A549 (cell line): ENCODE measurements at regions of chr17 and their contacts with region 1.

Region 1: DNA sequence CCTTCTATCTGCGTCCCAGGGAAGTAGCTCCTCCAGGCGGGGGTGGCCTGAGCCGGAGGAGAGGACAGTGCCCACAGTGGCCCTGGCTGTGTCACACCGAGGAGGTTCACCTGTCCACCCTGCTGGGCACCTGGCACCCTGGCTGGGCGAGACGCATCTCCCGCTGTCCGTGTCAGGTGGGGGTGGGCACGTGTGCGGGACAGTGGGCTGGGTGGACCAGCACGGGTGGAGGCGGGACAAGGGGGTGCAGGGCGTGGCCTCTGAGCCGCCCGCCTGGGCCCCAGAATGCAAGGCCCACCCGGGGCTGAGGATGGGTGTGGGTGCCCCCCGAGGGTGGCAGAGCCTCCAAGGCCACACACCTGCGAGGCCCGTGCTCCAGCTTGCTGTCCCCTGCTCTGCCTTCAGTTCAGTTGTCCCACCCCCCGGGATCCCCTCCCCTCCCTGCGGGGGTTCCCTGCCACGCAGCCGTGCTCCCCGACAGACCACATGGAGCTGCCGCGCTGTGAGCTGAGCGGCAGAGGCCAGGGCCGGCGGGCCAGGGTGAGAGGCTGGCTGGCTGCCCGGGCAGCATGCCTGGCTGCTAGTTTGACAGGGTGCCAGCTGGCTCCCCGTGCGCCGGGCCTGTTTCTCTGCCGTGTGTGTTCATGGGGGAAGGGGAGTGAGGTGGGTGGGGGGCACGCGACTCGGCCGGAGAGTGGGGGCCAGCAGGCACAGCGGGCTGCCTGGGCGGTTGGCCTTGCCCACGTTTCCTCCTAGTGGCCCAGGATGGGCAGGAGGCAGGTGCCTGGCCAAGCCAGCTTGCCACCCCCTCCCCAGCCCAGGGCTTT is 33.9 kb downstream of the BAHCC1 start:
- DNase-seq: peak; percentile 64 to 80
- ATAC-seq: peak; percentile 49 to 77
- H3K4me3 ChIP-seq: no peak overlapping the region
- H3K27ac ChIP-seq: peak overlapping the region; percentile 69 to 84
- H3K4me1 ChIP-seq: peaks cover 51% of the 10 kb centered on the region
- CTCF ChIP-seq: no peak
- EP300 ChIP-seq: peak in 1 of 2 experiments; percentile 22; a peak in 1 of 5 replicates
- POLR2A ChIP-seq: no peak
- RAD21 ChIP-seq: peak in 1 of 2 experiments; percentile 34; a peak in 1 of 5 replicates

Region 2: GRCh38 chr17:81253358-81254131 is 175.6 kb before region 1 on chr17:
- CTCF ChIA-PET with region 1: interaction called, 12 read pairs
- POLR2A ChIA-PET with region 1: interaction called, 4 read pairs
- DNase-seq: peak; percentile 43 to 62
- ATAC-seq: peak; percentile 12 to 47; a peak in 3 of 6 replicates
- H3K4me3 ChIP-seq: no peak overlapping the region
- H3K27ac ChIP-seq: no peak overlapping the region
- H3K4me1 ChIP-seq: peaks cover 18% of the 10 kb centered on the region
- CTCF ChIP-seq: peak; percentile 92
- EP300 ChIP-seq: no peak
- POLR2A ChIP-seq: no peak
- RAD21 ChIP-seq: peak; percentile 95 to 98

Region 3: DNA sequence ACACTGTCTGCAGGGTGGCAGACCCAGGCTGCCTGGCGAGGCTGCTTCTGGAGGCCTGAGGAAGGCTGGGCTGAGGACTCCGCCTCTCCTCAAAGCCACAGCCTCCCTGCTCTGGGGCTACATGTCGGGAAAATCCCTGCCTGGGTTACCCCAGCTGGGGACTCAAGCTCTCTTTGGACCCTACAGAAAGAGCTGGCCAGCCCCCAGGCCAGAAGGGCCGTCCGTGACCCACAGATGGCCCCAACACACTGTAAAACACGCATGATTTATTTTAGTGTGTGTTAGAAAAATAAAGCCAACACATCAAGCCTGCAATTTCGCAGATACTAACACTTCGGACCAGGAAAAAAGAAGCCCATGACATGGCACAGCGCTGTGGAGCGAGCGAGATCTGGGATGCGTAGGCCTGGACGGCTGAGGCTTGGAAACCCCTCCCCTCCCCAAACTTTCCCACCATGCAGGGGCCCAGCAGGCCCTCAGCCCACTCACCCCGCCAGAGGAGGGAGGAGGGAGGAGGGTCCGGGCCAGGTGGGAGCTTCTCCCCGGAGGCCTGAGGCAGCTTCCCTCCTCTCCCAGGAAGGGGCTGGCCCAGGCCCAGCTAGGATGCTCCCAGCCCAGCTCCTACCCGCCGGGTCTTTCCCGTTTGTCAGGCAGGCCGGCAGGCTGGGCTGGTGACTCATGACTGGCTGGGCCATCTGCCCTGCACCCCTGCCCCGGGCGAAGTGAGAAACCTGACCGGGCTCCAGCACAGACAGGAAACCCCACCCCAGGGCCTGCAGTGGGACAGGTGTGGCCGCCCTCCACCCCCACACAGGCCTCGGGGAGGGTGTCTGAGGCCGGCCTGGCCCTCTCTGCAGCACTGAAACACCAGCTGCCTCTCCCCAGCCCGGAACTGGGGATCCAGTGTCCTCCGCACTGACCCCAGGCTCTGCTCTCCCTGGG is 99.9 kb before region 1 on chr17:
- CTCF ChIA-PET with region 1: interaction called, 10 read pairs
- POLR2A ChIA-PET with region 1: interaction called, 3 read pairs
- DNase-seq: peak; percentile 93 to 99
- ATAC-seq: peak; percentile 80 to 90
- H3K4me3 ChIP-seq: peak overlapping the region; percentile 30
- H3K27ac ChIP-seq: peak overlapping the region; percentile 93 to 94
- H3K4me1 ChIP-seq: peaks cover 39% of the 10 kb centered on the region
- CTCF ChIP-seq: no peak
- EP300 ChIP-seq: peak; percentile 19 to 41; a peak in 1 of 5 replicates
- POLR2A ChIP-seq: peak; percentile 25
- RAD21 ChIP-seq: peak; percentile 24 to 40; a peak in 2 of 5 replicates

Region 4: DNA sequence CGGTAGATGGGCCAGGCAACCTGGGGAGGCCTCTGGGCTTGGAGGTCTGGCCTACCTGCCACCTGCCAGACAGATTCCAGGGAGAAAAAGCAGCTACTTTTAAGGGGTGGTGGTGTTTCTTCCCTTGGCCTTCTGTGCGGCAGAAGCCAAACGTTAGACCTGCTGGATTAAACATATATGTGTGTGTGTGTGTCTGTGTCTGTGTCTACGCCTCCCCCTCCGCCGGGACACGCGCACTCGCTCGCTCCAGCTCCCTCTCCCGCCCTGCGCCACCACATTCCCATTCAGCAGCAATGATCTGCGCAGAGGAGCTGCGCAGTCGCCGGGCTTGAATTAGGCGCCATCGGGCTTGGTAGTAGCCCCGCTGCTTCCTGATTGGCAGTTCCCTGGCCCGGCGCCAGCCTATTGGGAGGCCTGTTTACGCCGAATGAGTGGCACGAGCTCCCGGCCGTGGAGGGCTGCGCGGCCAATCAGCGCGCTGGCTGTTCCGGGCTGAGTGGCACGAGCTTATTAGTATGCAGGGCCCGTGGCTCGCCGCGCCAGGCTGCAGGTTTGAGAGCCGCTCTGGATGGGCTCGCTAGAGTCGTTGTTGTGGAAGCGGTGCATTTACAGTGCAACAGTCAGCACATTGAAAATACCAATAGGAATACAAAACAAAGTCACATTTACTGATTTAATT is 34.1 kb before region 1 on chr17 and contains the start of gene BAHCC1:
- CTCF ChIA-PET with region 1: interaction called, 24 read pairs
- POLR2A ChIA-PET with region 1: interaction called, 107 read pairs
- DNase-seq: peak; percentile 99 to 100
- ATAC-seq: peak; percentile 65 to 85
- H3K4me3 ChIP-seq: peak within 1 kb of the TSS; percentile 76
- H3K27ac ChIP-seq: peak within 1 kb of the TSS; percentile 94 to 98
- H3K4me1 ChIP-seq: peaks cover 40% of the 10 kb centered on the region
- CTCF ChIP-seq: no peak
- EP300 ChIP-seq: no peak
- POLR2A ChIP-seq: peak; percentile 79
- RAD21 ChIP-seq: no peak
- polyA plus RNA-seq, gene BAHCC1: 2.1 and 2.6 TPM in 2 replicates

Region 5: DNA sequence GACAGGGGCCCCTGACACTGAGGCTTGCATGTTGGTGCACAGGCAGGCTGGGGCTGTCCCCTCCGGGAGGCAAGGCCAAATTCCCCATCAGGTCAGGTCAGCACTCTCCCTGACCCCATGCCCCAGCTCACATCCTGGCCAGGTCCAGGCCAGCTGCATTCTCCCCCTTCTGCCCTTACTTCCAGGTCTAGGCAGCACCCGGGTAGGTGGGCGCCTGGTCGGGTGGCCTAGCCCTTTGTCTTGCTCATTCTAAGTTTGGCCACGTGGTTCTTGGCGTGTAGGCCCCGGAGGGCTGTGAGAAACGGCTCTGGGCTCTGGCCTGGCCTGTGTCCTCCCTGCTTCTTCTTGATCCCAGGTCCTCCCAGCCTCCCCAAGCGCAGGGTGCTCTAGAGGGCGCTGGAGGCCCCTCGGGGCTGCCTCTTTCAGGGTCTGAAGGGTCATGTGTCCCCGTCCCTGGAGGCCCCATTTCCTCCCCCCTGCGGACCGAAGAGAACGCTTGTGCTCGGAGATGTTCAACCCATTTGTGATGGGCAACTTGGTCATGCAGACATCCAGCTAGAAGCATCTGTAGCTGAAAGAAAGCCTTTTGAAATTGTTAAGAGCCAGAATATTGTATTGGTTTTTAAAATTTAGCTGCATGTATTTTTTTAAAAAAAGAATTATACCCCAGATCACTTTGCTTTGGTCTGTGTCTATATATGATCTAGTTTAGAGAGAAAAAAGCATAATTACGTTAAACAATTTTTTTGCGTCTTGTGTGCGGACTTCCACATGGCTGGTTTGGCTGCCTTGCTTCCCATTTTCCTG is 27.2 kb before region 1 on chr17:
- CTCF ChIA-PET with region 1: interaction called, 24 read pairs
- POLR2A ChIA-PET with region 1: interaction called, 107 read pairs
- DNase-seq: peak; percentile 69 to 81
- ATAC-seq: peak in 1 of 2 experiments; percentile 54; a peak in 3 of 6 replicates
- H3K4me3 ChIP-seq: no peak overlapping the region
- H3K27ac ChIP-seq: peak overlapping the region; percentile 16 to 98; a peak in 3 of 6 replicates
- H3K4me1 ChIP-seq: peaks cover 49% of the 10 kb centered on the region
- CTCF ChIP-seq: peak; percentile 55
- EP300 ChIP-seq: no peak
- POLR2A ChIP-seq: no peak
- RAD21 ChIP-seq: peak; percentile 64 to 67

Region 6: DNA sequence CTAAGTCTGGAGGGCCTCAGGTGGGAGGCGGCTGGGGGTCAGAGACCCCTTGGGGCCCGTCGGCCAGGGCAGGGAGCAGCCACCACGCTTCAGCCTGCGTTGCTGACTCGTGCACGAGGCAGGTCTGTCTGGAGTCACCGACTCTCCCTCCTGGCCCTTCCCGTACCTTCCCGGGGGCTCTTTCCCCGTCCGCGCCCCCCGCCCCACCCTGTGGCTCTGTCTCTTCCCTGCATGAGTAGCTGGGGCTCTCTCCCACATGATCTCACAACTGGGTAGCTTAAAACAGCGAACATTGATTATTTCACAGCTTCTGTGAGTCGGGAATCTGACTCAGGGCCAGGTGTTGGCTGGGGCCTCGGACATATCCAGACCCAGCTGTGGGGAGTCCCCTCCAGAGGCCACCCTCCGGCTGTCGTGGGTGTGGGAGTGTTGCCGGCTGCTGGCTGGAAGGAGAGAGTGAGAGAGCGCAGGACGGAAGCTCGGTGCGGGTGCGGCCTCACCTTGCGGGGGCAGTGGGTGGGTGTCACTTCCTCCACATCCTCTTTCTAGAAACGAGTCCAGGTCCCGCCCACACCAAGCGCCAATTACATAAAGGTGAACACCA is 16.6 kb before region 1 on chr17:
- CTCF ChIA-PET with region 1: interaction called, 39 read pairs
- POLR2A ChIA-PET with region 1: interaction called, 3 read pairs
- DNase-seq: no peak
- ATAC-seq: no peak
- H3K4me3 ChIP-seq: no peak overlapping the region
- H3K27ac ChIP-seq: peak overlapping the region in 1 of 2 experiments; percentile 45; a peak in 3 of 6 replicates
- H3K4me1 ChIP-seq: peaks cover 24% of the 10 kb centered on the region
- CTCF ChIP-seq: no peak
- EP300 ChIP-seq: no peak
- POLR2A ChIP-seq: no peak
- RAD21 ChIP-seq: no peak

Region 7: GRCh38 chr17:81537343-81537855 is 108.2 kb after region 1 on chr17:
- CTCF ChIA-PET with region 1: no interaction called
- POLR2A ChIA-PET with region 1: no interaction called
- DNase-seq: peak; percentile 67 to 77
- ATAC-seq: peak; percentile 19 to 61; a peak in 5 of 6 replicates
- H3K4me3 ChIP-seq: no peak overlapping the region
- H3K27ac ChIP-seq: no peak overlapping the region
- H3K4me1 ChIP-seq: peaks cover 11% of the 10 kb centered on the region; the same call in 1 of the 3 replicates
- CTCF ChIP-seq: peak; percentile 51
- EP300 ChIP-seq: no peak
- POLR2A ChIP-seq: no peak
- RAD21 ChIP-seq: peak; percentile 59 to 69; a peak in 4 of 5 replicates